ENCODE measurements at regions of chr6 and their contacts with region 1.

Region 1: GRCh38 chr6:152212437-152212836 is 405.0 kb downstream of the ESR1 start:
- DNase-seq: no peak
- H3K4me3 ChIP-seq: no peak overlapping the region
- H3K27ac ChIP-seq: no peak overlapping the region
- H3K4me1 ChIP-seq: no peaks in the 10 kb centered on the region
- H3K27me3 ChIP-seq: no peaks in the 10 kb centered on the region
- CTCF ChIP-seq: no peak
- POLR2A ChIP-seq: no peak

Region 2: GRCh38 chr6:150586850-150587359 is 1625.5 kb before region 1 on chr6:
- intact Hi-C with region 1: no loop called
- DNase-seq: no peak
- H3K4me3 ChIP-seq: no peak overlapping the region
- H3K27ac ChIP-seq: no peak overlapping the region
- H3K4me1 ChIP-seq: no peaks in the 10 kb centered on the region
- H3K27me3 ChIP-seq: no peaks in the 10 kb centered on the region
- CTCF ChIP-seq: no peak
- POLR2A ChIP-seq: no peak

Region 3: GRCh38 chr6:152244998-152245630 is 32.7 kb after region 1 on chr6:
- intact Hi-C with region 1: loop called (anchors 5 kb)
- DNase-seq: no peak
- H3K4me3 ChIP-seq: no peak overlapping the region
- H3K27ac ChIP-seq: peak overlapping the region; percentile 26 to 38
- H3K4me1 ChIP-seq: no peaks in the 10 kb centered on the region
- H3K27me3 ChIP-seq: no peaks in the 10 kb centered on the region
- CTCF ChIP-seq: no peak
- POLR2A ChIP-seq: no peak

Measured in prostate gland (tissue), 2 donors.